HepG2 (cell line): ENCODE measurements at regions of chr1 and their contacts with region 1.

Region 1: GRCh38 chr1:185317034-185317885 is at the start of gene IVNS1ABP:
- DNase-seq: peak; percentile 81
- ATAC-seq: peak; percentile 80
- H3K4me3 ChIP-seq: peak within 1 kb of the TSS; percentile 78 to 84 (median 83)
- H3K27ac ChIP-seq: peak within 1 kb of the TSS; percentile 92
- H3K4me1 ChIP-seq: peaks cover 49% of the 10 kb centered on the region
- H3K27me3 ChIP-seq: no peaks in the 10 kb centered on the region
- CTCF ChIP-seq: peak; percentile 80
- EP300 ChIP-seq: no peak
- POLR2A ChIP-seq: peak; percentile 87 to 97
- RAD21 ChIP-seq: peak; percentile 50; the same call in 1 of the 2 replicates
- total RNA-seq, gene IVNS1ABP: 41.6 and 51.7 TPM in 2 replicates

Region 2: GRCh38 chr1:184973272-184974055 is 343.8 kb before region 1 on chr1:
- CTCF ChIA-PET with region 1: no interaction called
- POLR2A ChIA-PET with region 1: no interaction called
- in situ Hi-C with region 1: no loop called
- intact Hi-C with region 1: no loop called
- DNase-seq: no peak
- ATAC-seq: peak; percentile 83
- H3K4me3 ChIP-seq: peak overlapping the region; percentile 26 to 60 (median 56); a peak in 5 of 6 replicates
- H3K27ac ChIP-seq: no peak overlapping the region
- H3K4me1 ChIP-seq: peaks cover 22% of the 10 kb centered on the region
- H3K27me3 ChIP-seq: peaks cover 0 to 45% of the 10 kb centered on the region in 2 experiments
- CTCF ChIP-seq: no peak; the same call in 1 of the 2 replicates
- EP300 ChIP-seq: no peak
- POLR2A ChIP-seq: no peak
- RAD21 ChIP-seq: no peak

Region 3: DNA sequence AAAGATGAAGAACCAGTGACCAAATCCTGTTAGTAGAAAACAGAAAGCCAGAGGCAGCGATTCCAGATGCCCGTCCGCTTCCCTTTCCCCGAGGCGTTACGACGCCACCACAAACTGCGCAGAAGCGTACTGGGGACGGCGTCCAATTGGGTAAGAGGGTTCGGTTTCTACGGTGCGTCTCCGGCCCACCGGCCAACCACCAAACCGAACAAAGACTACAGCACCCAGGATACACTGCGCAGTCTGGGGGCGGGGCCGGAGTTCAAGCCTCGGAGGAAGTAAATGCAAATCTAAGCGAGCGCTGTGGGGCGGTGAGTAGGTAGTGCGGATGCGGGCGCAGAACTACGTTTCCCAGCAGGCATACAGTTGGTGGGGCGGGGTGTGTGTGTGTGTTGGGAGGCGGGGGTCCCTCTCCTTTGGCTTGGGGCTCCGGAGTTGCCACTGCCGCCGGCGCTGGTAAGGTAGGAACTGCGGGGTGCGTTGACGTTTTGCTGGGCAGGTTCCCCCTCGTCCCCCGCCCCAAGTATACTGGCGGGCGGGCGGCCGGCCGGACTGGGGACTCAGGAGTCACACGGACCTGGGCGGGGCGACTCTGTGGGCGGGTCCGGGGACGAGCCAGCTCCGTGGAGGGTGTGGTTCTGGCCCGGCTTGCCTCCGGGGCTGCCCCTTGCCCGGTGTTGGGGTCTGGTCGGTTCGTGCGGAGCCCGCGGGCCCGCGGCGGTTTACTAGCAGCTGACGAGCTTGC is 160.2 kb before region 1 on chr1 and contains the starts of genes SWT1 and TRMT1L:
- CTCF ChIA-PET with region 1: no interaction called
- POLR2A ChIA-PET with region 1: interaction called, 7 read pairs
- in situ Hi-C with region 1: no loop called
- intact Hi-C with region 1: loop called (anchors 5 kb)
- DNase-seq: peak; percentile 98
- ATAC-seq: peak; percentile 96
- H3K4me3 ChIP-seq: peak within 1 kb of the TSS; percentile 92 to 94 (median 93)
- H3K27ac ChIP-seq: peak within 1 kb of the TSS; percentile 91
- H3K4me1 ChIP-seq: peaks cover 26% of the 10 kb centered on the region
- H3K27me3 ChIP-seq: no peaks in the 10 kb centered on the region; a peak in 1 of 5 replicates
- CTCF ChIP-seq: no peak
- EP300 ChIP-seq: no peak
- POLR2A ChIP-seq: peak; percentile 88 to 95
- RAD21 ChIP-seq: no peak
- total RNA-seq, gene SWT1: 2.5 and 4.8 TPM in 2 replicates
- total RNA-seq, gene TRMT1L: 17.9 and 25.4 TPM in 2 replicates

Region 4: GRCh38 chr1:185257947-185258203 is 59.4 kb before region 1 on chr1:
- CTCF ChIA-PET with region 1: no interaction called
- POLR2A ChIA-PET with region 1: no interaction called
- in situ Hi-C with region 1: no loop called
- intact Hi-C with region 1: no loop called
- DNase-seq: no peak
- ATAC-seq: no peak
- H3K4me3 ChIP-seq: no peak overlapping the region
- H3K27ac ChIP-seq: no peak overlapping the region
- H3K4me1 ChIP-seq: peaks cover 18% of the 10 kb centered on the region
- H3K27me3 ChIP-seq: no peaks in the 10 kb centered on the region
- CTCF ChIP-seq: no peak
- EP300 ChIP-seq: no peak
- POLR2A ChIP-seq: no peak
- RAD21 ChIP-seq: no peak

Region 5: GRCh38 chr1:185350027-185350442 is 32.8 kb after region 1 on chr1:
- CTCF ChIA-PET with region 1: no interaction called
- POLR2A ChIA-PET with region 1: interaction called, 13 read pairs
- in situ Hi-C with region 1: no loop called
- intact Hi-C with region 1: no loop called
- DNase-seq: peak; percentile 93
- ATAC-seq: peak; percentile 98
- H3K4me3 ChIP-seq: no peak overlapping the region
- H3K27ac ChIP-seq: peak overlapping the region; percentile 95
- H3K4me1 ChIP-seq: peaks cover 67% of the 10 kb centered on the region
- H3K27me3 ChIP-seq: no peaks in the 10 kb centered on the region
- CTCF ChIP-seq: no peak
- EP300 ChIP-seq: peak; percentile 46 to 69; a peak in 3 of 4 replicates
- POLR2A ChIP-seq: no peak
- RAD21 ChIP-seq: no peak

Region 6: GRCh38 chr1:185595835-185596667 is 278.8 kb after region 1 on chr1:
- CTCF ChIA-PET with region 1: no interaction called
- POLR2A ChIA-PET with region 1: interaction called, 3 read pairs
- in situ Hi-C with region 1: no loop called
- intact Hi-C with region 1: loop called (anchors 2 kb)
- DNase-seq: peak; percentile 46
- ATAC-seq: peak; percentile 90
- H3K4me3 ChIP-seq: no peak overlapping the region
- H3K27ac ChIP-seq: no peak overlapping the region
- H3K4me1 ChIP-seq: peaks cover 8% of the 10 kb centered on the region; the same call in 1 of the 2 replicates
- H3K27me3 ChIP-seq: no peaks in the 10 kb centered on the region
- CTCF ChIP-seq: peak; percentile 70
- EP300 ChIP-seq: no peak
- POLR2A ChIP-seq: no peak
- RAD21 ChIP-seq: peak; percentile 26; the same call in 1 of the 2 replicates

Region 7: GRCh38 chr1:185681034-185681633 is 363.9 kb after region 1 on chr1:
- CTCF ChIA-PET with region 1: no interaction called
- POLR2A ChIA-PET with region 1: interaction called, 3 read pairs
- in situ Hi-C with region 1: loop called (anchors 10 kb)
- intact Hi-C with region 1: loop called (anchors 5 kb)
- DNase-seq: peak; percentile 50
- ATAC-seq: peak; percentile 84
- H3K4me3 ChIP-seq: no peak overlapping the region
- H3K27ac ChIP-seq: no peak overlapping the region
- H3K4me1 ChIP-seq: peaks cover 9% of the 10 kb centered on the region
- H3K27me3 ChIP-seq: peaks cover 0 to 12% of the 10 kb centered on the region in 2 experiments; a peak in 1 of 5 replicates
- CTCF ChIP-seq: peak; percentile 77
- EP300 ChIP-seq: no peak
- POLR2A ChIP-seq: no peak
- RAD21 ChIP-seq: peak; percentile 65; the same call in 1 of the 2 replicates